Esophagus squamous epithelium (tissue), 5 donors: ENCODE measurements at regions of chr12 and their contacts with region 1.

Region 1: GRCh38 chr12:123141615-123142517 is 9.0 kb downstream of the PITPNM2 start:
- DNase-seq: no peak
- H3K4me3 ChIP-seq: peak overlapping the region in 1 of 4 donors; percentile 19
- H3K27ac ChIP-seq: peak overlapping the region; percentile 70 to 88 (median 84)
- H3K4me1 ChIP-seq: peaks cover 35 to 54% (median 49%) of the 10 kb centered on the region in 3 donors
- H3K27me3 ChIP-seq: no peaks in the 10 kb centered on the region
- CTCF ChIP-seq: no peak
- POLR2A ChIP-seq: no peak

Region 2: DNA sequence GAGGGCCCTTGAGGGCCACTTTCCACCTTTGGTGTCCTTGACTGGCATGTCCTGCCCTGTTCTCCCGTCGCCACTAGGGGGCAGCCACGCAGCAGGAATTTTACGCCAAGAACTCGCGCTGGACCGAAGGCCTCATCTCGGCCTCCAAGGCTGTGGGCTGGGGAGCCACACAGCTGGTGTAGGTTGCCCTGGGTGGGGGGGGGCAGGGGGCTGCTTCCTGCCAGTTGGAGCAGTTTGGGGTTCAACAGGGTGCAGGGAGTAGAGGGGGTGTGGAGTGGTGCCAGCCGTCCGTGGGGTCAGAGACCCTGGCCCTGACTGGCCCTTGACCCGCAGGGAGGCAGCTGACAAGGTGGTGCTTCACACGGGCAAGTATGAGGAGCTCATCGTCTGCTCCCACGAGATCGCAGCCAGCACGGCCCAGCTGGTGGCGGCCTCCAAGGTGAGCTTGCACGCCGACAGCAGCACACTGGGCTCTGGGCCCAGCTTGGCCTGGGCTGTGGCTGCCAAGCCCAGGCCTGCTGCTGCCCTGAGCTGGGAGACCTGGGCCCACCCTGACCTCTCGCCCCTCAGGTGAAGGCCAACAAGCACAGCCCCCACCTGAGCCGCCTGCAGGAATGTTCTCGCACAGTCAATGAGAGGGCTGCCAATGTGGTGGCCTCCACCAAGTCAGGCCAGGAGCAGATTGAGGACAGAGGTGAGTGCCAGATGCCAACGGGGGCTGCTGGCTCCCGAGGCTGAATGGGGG is 281.3 kb before region 1 on chr12:
- intact Hi-C with region 1: no loop called
- DNase-seq: no peak
- H3K4me3 ChIP-seq: no peak overlapping the region
- H3K27ac ChIP-seq: peak overlapping the region; percentile 3 to 72 (median 44)
- H3K4me1 ChIP-seq: peaks cover 5 to 48% (median 27%) of the 10 kb centered on the region in 3 donors
- H3K27me3 ChIP-seq: no peaks in the 10 kb centered on the region
- CTCF ChIP-seq: peak; percentile 94 to 98 (median 96)
- POLR2A ChIP-seq: no peak

Region 3: DNA sequence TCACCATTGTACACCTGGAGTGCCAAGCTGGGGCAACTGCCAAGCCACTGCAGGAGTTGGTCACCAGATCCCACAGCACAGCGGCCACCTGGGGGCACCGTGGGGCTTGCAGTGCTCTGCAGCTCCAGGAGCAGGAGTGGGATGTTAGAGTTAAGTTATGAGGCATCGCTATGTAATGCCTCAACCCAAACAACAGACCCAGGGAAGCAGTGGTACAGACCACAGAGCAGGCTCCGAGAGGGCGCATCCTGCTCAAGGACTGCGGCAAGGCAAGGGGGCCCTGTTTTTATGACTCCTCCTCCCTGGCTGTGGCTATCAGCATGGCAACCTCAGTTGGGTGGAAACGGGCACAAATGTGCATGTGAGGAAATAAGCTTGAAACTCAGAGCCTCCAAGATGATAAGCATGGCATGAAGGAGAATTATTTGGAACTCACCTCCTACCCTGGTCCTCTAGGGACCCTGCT is 98.3 kb before region 1 on chr12:
- intact Hi-C with region 1: loop called (anchors 10 kb)
- DNase-seq: no peak
- H3K4me3 ChIP-seq: no peak overlapping the region
- H3K27ac ChIP-seq: peak overlapping the region; percentile 28 to 88 (median 81)
- H3K4me1 ChIP-seq: peaks cover 0 to 51% (median 22%) of the 10 kb centered on the region in 3 donors
- H3K27me3 ChIP-seq: no peaks in the 10 kb centered on the region
- CTCF ChIP-seq: peak; percentile 26 to 75 (median 64)
- POLR2A ChIP-seq: no peak